ENCODE measurements at regions of chr11 and their contacts with region 1.

Region 1: GRCh38 chr11:113305440-113306336 is 8.7 kb upstream of the TTC12 start:
- DNase-seq: peak; percentile 86
- H3K4me3 ChIP-seq: no peak overlapping the region
- H3K27ac ChIP-seq: no peak overlapping the region
- H3K4me1 ChIP-seq: no peaks in the 10 kb centered on the region
- H3K27me3 ChIP-seq: no peaks in the 10 kb centered on the region
- CTCF ChIP-seq: peak; percentile 74 to 81 (median 77)
- POLR2A ChIP-seq: no peak

Region 2: DNA sequence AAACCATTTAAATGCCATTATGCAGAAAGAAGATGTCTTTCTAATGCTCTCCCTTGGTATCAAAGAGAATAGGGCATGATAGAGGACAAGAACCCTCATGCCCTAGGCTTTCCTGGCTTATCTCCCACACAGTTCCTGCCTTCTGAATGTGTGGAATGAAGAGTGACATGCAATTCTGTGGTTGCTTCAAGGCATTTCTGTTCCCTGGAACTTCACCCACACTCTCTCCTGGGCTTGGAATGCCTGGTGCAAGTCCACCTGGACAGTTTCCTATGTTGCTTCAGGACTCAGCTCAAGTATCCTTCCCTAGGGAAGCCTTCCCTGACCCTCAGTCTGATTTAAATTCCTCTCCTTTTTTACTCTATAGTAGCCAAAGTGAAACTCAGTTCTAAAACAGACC is 223.3 kb after region 1 on chr11:
- intact Hi-C with region 1: loop called (anchors 10 kb)
- DNase-seq: no peak
- H3K4me3 ChIP-seq: no peak overlapping the region
- H3K27ac ChIP-seq: no peak overlapping the region
- H3K4me1 ChIP-seq: no peaks in the 10 kb centered on the region
- H3K27me3 ChIP-seq: no peaks in the 10 kb centered on the region
- CTCF ChIP-seq: no peak
- POLR2A ChIP-seq: no peak

Region 3: DNA sequence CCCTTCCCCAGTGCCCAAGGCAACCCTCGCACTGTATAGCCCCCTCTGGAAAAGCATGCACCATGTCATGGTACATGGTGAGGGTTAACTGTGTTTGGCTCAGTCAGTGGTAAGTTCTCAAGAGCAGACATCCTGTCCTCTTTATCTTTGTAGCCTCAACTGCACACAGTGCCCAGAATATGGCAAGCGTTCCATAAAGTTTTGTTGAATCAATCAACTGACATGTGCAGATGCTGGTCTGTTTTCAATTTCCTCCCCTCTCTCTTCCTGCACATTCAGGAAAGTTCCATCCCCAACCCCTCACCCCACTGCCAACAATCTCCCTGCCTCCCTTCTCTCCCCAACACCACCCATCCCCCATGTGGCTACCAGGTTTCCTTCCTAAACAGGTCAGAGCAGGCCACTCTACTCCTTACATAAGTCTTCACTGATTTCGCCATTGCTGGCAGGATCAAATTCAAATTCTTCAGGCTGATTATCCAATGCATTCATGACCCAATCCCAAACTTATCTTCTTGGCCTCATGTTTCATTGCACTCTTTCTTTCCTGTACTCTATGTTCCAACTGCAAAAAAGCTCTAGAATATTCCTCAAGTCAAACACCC is 415.9 kb after region 1 on chr11:
- intact Hi-C with region 1: loop called (anchors 5 kb)
- DNase-seq: no peak
- H3K4me3 ChIP-seq: no peak overlapping the region
- H3K27ac ChIP-seq: no peak overlapping the region
- H3K4me1 ChIP-seq: peaks cover 6% of the 10 kb centered on the region
- H3K27me3 ChIP-seq: no peaks in the 10 kb centered on the region
- CTCF ChIP-seq: no peak
- POLR2A ChIP-seq: no peak